K562 (cell line): ENCODE measurements at regions of chr12 and their contacts with region 1.

Region 1: GRCh38 chr12:46259713-46260112 is 9.1 kb downstream of the SLC38A1 start:
- DNase-seq: peak in 2 of 4 experiments; percentile 36 to 57
- ATAC-seq: peak; percentile 40
- H3K4me3 ChIP-seq: no peak overlapping the region
- H3K27ac ChIP-seq: no peak overlapping the region
- H3K4me1 ChIP-seq: peaks cover 6 to 49% of the 10 kb centered on the region in 2 experiments; a peak in 4 of 5 replicates
- H3K27me3 ChIP-seq: no peaks in the 10 kb centered on the region
- CTCF ChIP-seq: no peak
- EP300 ChIP-seq: no peak
- POLR2A ChIP-seq: no peak
- RAD21 ChIP-seq: no peak

Region 2: GRCh38 chr12:46219884-46220655 is 39.6 kb before region 1 on chr12:
- CTCF ChIA-PET with region 1: no interaction called
- POLR2A ChIA-PET with region 1: no interaction called
- in situ Hi-C with region 1: no loop called
- intact Hi-C with region 1: loop called (anchors 5 kb)
- DNase-seq: peak; percentile 68 to 88 (median 77)
- ATAC-seq: peak; percentile 90
- H3K4me3 ChIP-seq: no peak overlapping the region
- H3K27ac ChIP-seq: peak overlapping the region; percentile 83
- H3K4me1 ChIP-seq: peaks cover 0 to 35% of the 10 kb centered on the region in 2 experiments; a peak in 4 of 5 replicates
- H3K27me3 ChIP-seq: no peaks in the 10 kb centered on the region
- CTCF ChIP-seq: no peak
- EP300 ChIP-seq: peak; percentile 84
- POLR2A ChIP-seq: no peak
- RAD21 ChIP-seq: no peak